AG04449 (cell line): ENCODE measurements at regions of chr15 and their contacts with region 1.

Region 1: GRCh38 chr15:70466895-70467529 is 296.3 kb downstream of the UACA start:
- DNase-seq: no peak
- H3K4me3 ChIP-seq: no peak overlapping the region
- CTCF ChIP-seq: peak; percentile 86

Region 2: GRCh38 chr15:69475769-69476358 is 991.1 kb before region 1 on chr15:
- CTCF ChIA-PET with region 1: interaction called, 51 read pairs
- POLR2A ChIA-PET with region 1: no interaction called
- DNase-seq: no peak
- H3K4me3 ChIP-seq: no peak overlapping the region
- CTCF ChIP-seq: peak; percentile 92

Region 3: GRCh38 chr15:69576035-69576526 is 890.9 kb before region 1 on chr15:
- CTCF ChIA-PET with region 1: interaction called, 27 read pairs
- POLR2A ChIA-PET with region 1: no interaction called
- DNase-seq: no peak
- H3K4me3 ChIP-seq: no peak overlapping the region
- CTCF ChIP-seq: peak; percentile 85

Region 4: DNA sequence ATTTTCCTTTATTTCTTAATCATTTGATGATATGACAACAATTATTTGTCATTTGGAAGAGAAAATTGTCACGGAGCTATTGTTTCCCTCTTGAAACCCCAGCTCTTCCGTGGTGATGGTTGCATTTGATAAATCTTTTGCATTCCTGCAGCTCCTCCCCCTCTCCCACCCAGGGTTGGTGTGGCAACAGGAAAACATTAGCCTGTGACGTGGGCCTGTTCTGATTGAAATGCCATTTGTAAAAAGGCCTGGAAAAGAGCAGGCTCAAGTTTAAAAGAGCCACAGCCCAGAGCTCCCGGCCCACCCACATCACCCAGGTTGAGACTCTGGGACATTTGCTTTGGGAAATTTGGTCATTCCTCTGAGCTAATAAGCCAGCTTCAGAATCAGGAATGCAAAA is 731.9 kb before region 1 on chr15:
- CTCF ChIA-PET with region 1: interaction called, 10 read pairs
- POLR2A ChIA-PET with region 1: no interaction called
- DNase-seq: no peak
- H3K4me3 ChIP-seq: no peak overlapping the region
- CTCF ChIP-seq: no peak

Region 5: GRCh38 chr15:70289203-70289955 is 177.6 kb before region 1 on chr15:
- CTCF ChIA-PET with region 1: no interaction called
- POLR2A ChIA-PET with region 1: no interaction called
- DNase-seq: peak; percentile 33
- H3K4me3 ChIP-seq: no peak overlapping the region
- CTCF ChIP-seq: no peak

Region 6: GRCh38 chr15:70451821-70452653 is 15.0 kb before region 1 on chr15:
- CTCF ChIA-PET with region 1: interaction called, 30 read pairs
- POLR2A ChIA-PET with region 1: no interaction called
- DNase-seq: no peak
- H3K4me3 ChIP-seq: no peak overlapping the region
- CTCF ChIP-seq: no peak